ENCODE measurements at regions of chr1 and their contacts with region 1.

Region 1: DNA sequence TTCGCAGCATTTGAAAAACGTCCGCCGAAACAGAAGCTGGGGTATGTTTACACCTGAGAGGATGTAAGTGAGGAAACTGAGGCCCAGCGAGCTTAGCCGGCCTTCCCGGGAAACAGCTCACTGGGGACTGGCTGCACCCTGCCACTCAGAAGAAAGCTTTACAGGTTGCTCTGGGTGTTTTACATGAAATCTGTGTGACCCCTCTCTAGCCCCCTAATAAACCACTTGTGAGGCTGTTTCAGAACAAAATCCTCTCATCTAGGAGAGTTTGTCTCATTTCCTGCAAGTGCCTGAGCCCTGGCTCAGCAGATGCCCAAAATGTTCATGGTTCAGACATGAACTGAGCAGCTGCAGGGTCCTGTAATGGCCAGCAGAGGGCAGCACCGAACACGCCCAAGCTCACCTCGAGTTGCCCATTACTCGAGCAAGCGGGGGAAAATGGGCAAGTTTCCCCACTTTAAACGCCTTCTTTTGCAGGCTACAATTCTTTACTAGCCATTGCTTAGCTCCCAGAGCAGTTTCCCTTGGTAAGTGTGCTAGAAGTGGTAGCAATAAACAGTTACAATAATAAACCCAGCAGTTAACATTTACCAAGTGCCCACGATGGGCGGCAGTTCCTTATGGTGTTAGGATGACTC is 76.4 kb downstream of the FHAD1 start:
- DNase-seq: peak; percentile 85
- ATAC-seq: peak; percentile 95
- H3K4me3 Mint-ChIP-seq: no peak overlapping the region
- H3K27ac Mint-ChIP-seq: no peak overlapping the region
- H3K4me1 Mint-ChIP-seq: no peaks in the 10 kb centered on the region
- H3K27me3 Mint-ChIP-seq: peaks cover 6% of the 10 kb centered on the region

Region 2: DNA sequence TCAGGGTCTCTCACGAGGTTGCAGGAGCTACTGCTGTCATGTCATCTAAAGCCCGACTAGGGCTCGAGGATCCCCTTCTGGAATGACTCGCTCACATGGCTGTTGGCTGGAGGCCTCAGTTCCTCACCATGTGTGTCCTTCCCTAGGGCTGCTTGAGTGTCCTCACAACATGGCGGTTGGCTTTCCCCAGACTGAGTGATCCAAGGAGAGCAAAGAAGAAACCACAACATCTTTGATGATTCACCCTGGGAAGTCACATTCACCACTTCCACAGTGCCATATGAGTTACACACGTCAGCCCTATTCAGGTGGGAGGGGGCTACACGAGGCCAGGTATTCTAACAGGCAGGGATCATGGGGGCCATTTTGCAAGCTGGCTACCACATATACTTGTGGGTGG is 11.6 kb before region 1 on chr1:
- CTCF ChIA-PET with region 1: interaction called, 10 read pairs
- POLR2A ChIA-PET with region 1: no interaction called
- intact Hi-C with region 1: no loop called
- DNase-seq: peak; percentile 10
- ATAC-seq: peak; percentile 49
- H3K4me3 Mint-ChIP-seq: no peak overlapping the region
- H3K27ac Mint-ChIP-seq: no peak overlapping the region
- H3K4me1 Mint-ChIP-seq: no peaks in the 10 kb centered on the region
- H3K27me3 Mint-ChIP-seq: no peaks in the 10 kb centered on the region

Region 3: DNA sequence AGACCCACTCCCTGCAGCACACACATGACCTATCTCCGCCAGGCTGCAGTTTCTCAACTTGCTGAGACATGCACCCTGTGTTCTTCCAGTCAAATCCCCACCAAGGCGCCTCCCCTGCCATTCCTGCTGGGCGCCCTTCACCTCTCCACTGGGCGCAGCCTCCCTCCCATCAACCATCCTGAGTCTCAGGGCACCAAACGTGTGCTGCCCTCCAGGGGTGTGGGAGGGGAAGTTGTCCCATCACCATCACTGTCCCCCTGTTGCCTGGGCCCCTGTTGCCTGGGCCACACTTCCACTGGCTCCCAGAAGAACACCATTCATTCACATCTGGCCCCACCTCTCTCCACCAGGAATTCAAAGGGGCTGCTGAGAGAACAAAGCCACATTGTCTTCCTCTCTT is 41.3 kb after region 1 on chr1:
- CTCF ChIA-PET with region 1: no interaction called
- POLR2A ChIA-PET with region 1: no interaction called
- intact Hi-C with region 1: loop called in 1 of 2 experiments (anchors 2 kb)
- DNase-seq: no peak
- ATAC-seq: no peak
- H3K4me3 Mint-ChIP-seq: no peak overlapping the region
- H3K27ac Mint-ChIP-seq: no peak overlapping the region
- H3K4me1 Mint-ChIP-seq: no peaks in the 10 kb centered on the region
- H3K27me3 Mint-ChIP-seq: no peaks in the 10 kb centered on the region

Region 4: GRCh38 chr1:15430787-15431570 is 107.5 kb after region 1 on chr1:
- CTCF ChIA-PET with region 1: interaction called, 183 read pairs
- POLR2A ChIA-PET with region 1: no interaction called
- intact Hi-C with region 1: loop called (anchors 1 kb)
- DNase-seq: peak; percentile 85
- ATAC-seq: peak; percentile 84
- H3K4me3 Mint-ChIP-seq: no peak overlapping the region
- H3K27ac Mint-ChIP-seq: no peak overlapping the region
- H3K4me1 Mint-ChIP-seq: peaks cover 2% of the 10 kb centered on the region
- H3K27me3 Mint-ChIP-seq: no peaks in the 10 kb centered on the region

Region 5: GRCh38 chr1:15741183-15741850 is 417.8 kb after region 1 on chr1:
- CTCF ChIA-PET with region 1: interaction called, 4 read pairs
- POLR2A ChIA-PET with region 1: no interaction called
- intact Hi-C with region 1: loop called in 1 of 2 experiments (anchors 2 kb)
- DNase-seq: peak; percentile 88
- ATAC-seq: peak; percentile 96
- H3K4me3 Mint-ChIP-seq: no peak overlapping the region
- H3K27ac Mint-ChIP-seq: no peak overlapping the region
- H3K4me1 Mint-ChIP-seq: peaks cover 5% of the 10 kb centered on the region
- H3K27me3 Mint-ChIP-seq: no peaks in the 10 kb centered on the region

Measured in activated CD4-positive, alpha-beta T cell treated with anti-CD3 and anti-CD28 coated beads for 36 hours (primary cell).